Pancreas (tissue), 10 donors: ENCODE measurements at regions of chr2 and their contacts with region 1.

Region 1: DNA sequence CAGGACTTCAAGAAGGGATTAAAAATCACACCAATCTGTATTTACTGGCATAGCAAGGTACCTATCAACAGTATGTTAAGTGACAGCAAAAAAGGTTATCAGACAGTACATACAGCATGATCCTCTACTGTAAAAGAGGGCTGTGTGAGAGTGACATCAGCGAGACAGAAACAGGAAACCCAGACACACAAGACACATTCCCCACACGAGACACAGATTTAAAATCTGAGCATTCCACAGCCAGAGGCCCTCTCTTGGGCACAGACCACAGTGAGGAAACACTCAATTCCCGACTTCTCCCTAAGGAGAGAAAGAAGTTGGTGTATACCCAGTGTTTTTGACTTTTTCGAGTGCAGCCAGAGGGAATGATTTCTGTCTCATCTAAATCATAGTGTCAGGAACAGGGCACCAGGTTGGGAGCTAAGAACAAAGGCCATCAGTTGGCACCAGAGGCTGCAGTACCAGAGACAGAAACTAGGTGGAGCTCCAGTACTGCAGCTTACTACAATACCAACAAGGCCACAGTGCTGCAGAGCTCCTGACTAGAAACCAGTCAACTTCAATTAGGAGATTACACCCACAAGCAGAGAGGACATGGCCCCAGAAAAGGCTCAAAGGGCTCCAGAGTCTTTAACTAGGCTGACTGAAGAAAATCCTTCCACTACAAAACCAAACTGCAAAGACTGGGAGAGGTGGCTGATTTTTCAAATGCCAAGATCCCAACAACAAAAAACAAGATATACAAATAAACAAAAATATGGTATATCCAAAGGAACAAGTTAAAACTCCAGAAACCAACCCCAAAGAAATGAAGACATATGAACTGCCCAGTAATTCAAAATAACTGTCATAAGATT is 41.0 kb downstream of the UNC50 start:
- DNase-seq: peak in 5 of 6 donors; percentile 70 to 90 (median 73)
- ATAC-seq: peak; percentile 90 to 99 (median 98)
- H3K4me3 ChIP-seq: no peak overlapping the region
- H3K27ac ChIP-seq: no peak overlapping the region
- H3K4me1 ChIP-seq: peaks cover 5 to 9% (median 8%) of the 10 kb centered on the region in 3 donors
- H3K27me3 ChIP-seq: no peaks in the 10 kb centered on the region
- CTCF ChIP-seq: peak; percentile 90 to 97 (median 96)

Region 2: DNA sequence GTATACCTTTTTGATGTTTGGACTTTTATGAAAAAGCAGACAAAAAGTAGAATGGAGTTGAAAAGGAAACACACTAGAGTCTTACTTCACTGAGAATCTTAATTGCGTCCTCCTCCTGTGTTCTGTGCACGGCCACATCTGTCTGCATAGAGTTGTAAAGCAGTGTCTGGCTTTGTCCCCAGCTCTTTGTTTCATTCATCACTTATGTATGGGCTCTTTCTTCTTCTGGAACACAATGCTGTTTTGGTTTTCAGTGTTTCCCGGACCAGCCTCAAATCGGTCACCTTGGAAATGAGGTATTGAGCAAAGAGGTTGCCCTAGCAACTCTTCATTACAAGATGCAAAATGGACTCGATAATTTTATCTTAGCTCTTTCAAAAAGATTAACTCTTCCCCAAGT is 407.4 kb before region 1 on chr2:
- intact Hi-C with region 1: no loop called
- DNase-seq: no peak
- ATAC-seq: no peak
- H3K4me3 ChIP-seq: no peak overlapping the region
- H3K27ac ChIP-seq: no peak overlapping the region
- H3K4me1 ChIP-seq: no peaks in the 10 kb centered on the region
- H3K27me3 ChIP-seq: no peaks in the 10 kb centered on the region
- CTCF ChIP-seq: no peak

Region 3: DNA sequence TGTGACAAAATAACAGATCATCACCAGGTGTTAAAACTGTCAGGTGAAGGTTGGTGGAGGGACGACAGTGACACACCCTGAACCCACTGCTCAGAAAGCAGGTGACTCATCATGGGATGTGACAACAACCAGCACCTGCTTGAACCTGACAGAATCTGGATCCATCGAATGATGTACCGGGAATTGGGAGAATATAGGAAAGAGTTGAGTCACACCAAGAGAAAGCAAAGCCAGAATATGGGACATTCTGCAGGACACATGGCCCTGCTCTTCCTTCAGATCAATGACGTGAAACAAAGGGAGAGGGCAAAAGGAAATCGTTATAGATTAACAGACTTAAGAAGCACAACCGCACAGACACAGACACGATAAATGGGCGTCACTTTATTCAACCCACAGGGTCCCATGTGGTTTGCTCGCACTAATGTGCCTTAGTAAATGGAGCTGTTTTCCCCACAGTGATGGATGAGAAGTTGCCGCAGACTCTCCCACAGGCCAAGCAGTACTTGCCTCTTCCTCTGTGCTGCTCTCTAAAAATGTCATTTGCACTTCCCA is 186.5 kb after region 1 on chr2:
- intact Hi-C with region 1: loop called (anchors 5 to 10 kb)
- DNase-seq: no peak
- ATAC-seq: peak in 2 of 4 donors; percentile 28 to 35
- H3K4me3 ChIP-seq: no peak overlapping the region
- H3K27ac ChIP-seq: no peak overlapping the region
- H3K4me1 ChIP-seq: no peaks in the 10 kb centered on the region
- H3K27me3 ChIP-seq: no peaks in the 10 kb centered on the region
- CTCF ChIP-seq: no peak

Region 4: GRCh38 chr2:99066075-99066958 is 417.0 kb after region 1 on chr2:
- intact Hi-C with region 1: loop called in 1 of 3 experiments (anchors 5 kb)
- DNase-seq: peak in 3 of 6 donors; percentile 12 to 36 (median 26)
- ATAC-seq: peak; percentile 93 to 98 (median 96)
- H3K4me3 ChIP-seq: peak overlapping the region in 1 of 4 donors; percentile 1
- H3K27ac ChIP-seq: peak overlapping the region in 2 of 4 donors; percentile 44 to 75
- H3K4me1 ChIP-seq: peaks cover 0 to 10% (median 7%) of the 10 kb centered on the region in 3 donors
- H3K27me3 ChIP-seq: no peaks in the 10 kb centered on the region
- CTCF ChIP-seq: peak in 2 of 4 donors; percentile 19 to 30